ENCODE measurements at regions of chr17 and their contacts with region 1.

Region 1: GRCh38 chr17:66165513-66166123 is 26.3 kb downstream of the CEP112 start:
- DNase-seq: no peak
- ATAC-seq: no peak

Region 2: DNA sequence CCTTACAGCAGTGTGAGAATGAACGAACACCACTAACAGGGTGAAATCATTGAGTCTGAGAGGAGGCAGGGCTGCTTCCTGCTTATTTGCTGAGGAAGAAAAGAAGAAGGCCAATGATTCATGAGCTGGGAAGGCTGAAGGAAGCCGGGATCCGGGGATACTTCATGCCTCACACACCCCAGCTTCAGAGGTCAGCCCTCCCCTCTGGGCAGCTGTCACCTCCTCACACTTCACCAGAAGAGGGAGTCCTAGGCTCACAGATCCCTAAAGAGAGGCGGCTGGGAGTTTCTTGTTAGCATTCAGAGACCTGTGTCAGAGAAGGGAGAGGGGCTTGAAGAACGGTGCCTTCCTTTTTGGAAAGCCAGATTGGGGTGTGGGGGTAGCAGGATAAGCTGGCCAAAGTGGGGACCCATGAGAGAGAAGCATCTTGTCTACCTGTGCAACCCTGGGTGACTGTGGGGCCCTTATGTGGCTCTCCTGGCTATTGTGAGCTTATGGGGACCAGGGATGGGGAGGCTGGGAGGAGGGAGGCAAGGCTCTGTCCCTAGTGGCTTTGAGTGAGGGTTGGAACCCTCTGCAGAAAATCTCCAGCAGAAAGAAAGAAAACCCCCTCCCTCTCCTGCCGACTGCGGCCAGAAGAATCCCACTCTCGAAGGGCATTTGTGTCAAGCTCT is 933.8 kb before region 1 on chr17:
- intact Hi-C with region 1: loop called (anchors 5 to 10 kb)
- DNase-seq: peak; percentile 37
- ATAC-seq: peak; percentile 67 to 84

Region 3: GRCh38 chr17:65294179-65294720 is 871.4 kb before region 1 on chr17:
- intact Hi-C with region 1: loop called (anchors 5 to 10 kb)
- DNase-seq: peak; percentile 60
- ATAC-seq: peak; percentile 89 to 95

Region 4: DNA sequence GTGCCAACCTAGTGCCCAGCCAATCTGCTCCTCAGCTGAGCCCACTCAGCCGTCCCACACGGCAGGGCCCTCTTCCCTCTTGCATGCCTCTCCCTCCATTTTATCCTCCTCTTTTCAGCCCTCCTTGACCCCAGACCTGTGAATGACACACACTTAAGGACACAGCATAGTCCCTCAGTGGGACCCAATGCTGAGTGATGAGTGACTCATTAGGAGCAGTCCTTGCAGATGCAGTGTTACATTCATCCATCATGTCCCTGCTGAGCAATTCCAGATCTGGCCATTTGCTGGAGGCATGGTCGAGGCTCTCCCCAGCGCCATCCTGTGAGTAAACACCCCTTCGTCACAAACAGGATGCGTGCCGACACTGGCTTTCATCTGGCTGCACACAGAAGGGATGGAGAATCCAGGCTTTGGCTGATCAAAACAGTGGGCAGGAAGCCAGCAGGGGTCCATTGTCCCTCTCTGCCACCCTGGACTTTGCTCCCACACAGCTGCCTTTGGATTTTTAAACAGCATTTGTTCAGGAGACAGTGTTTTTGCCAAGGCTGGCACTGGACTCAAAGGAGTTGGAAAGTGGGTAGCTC is 726.8 kb before region 1 on chr17:
- intact Hi-C with region 1: loop called in 1 of 2 experiments (anchors 10 kb)
- DNase-seq: no peak
- ATAC-seq: peak in 1 of 2 donors; percentile 59